ENCODE measurements at regions of chr6 and their contacts with region 1.

Region 1: DNA sequence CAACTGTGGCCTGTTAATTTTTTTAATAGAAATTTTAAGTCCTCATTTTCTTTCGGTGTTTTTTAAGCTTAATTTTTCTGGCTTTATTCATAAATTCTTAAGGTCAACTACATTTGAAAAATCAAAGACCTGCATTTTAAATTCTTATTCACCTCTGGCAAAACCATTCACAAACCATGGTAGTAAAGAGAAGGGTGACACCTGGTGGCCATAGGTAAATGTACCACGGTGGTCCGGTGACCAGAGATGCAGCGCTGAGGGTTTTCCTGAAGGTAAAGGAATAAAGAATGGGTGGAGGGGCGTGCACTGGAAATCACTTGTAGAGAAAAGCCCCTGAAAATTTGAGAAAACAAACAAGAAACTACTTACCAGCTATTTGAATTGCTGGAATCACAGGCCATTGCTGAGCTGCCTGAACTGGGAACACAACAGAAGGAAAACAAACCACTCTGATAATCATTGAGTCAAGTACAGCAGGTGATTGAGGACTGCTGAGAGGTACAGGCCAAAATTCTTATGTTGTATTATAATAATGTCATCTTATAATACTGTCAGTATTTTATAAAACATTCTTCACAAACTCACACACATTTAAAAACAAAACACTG is 10.1 kb downstream of the HFE start:
- DNase-seq: peak in 7 of 10 donors; percentile 48 to 90 (median 63)

Region 2: DNA sequence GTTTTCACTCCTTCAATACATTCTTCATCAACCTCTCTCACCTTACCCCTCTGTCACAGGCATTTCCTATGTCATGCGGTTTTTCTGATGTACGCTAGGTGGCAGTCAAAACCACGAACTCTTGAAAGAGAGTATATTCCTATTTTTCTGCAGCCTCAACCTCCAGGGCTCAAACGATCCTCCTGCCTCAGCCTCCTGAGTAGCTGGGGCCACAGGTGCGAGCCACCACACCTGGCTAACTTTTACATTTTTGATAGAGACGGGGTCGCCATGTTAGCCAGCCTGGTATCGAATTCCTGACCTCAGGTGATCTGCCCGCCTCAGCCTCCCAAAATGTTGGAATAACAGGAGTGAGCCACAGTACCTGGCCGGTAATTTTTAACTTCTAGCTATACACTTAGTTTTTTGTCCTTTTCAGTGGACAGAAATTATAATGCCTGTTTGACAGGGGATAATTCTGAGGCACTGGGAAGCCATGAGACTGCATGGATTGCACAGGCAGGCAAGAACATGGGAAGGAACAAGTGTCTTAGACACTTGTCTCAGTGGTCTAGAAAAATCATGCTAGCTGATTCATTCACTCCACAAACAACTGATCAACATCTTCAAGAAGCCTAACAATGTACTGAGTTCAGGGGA is 32.6 kb before region 1 on chr6:
- intact Hi-C with region 1: loop called (anchors 1 kb)
- DNase-seq: no peak